Vagina (tissue), 2 donors: ENCODE measurements at regions of chr1 and their contacts with region 1.

Region 1: DNA sequence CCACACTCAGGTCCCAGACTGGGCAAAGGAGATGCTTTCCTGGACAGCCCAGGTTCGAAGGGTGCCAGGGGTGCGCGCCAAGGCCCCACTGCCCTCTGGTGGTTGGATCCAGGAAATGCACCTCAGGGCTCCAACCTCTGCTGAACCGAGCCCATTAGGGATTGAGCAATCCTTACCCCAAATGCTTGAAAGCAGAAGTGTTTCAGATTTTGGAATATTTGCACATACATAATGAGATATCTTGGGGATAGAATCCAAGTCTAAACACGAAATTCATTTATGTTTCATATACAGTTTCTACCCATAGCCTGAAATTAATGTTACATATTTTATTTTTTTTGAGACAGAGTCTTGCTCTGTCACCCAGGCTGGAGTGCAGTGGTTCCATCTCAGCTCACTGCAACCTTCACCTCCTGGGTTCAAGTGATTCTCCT is 57.4 kb downstream of the SLC9A1 start:
- DNase-seq: no peak
- H3K4me3 ChIP-seq: no peak overlapping the region
- H3K27ac ChIP-seq: peak overlapping the region; percentile 93
- H3K4me1 ChIP-seq: peaks cover 31% of the 10 kb centered on the region
- H3K27me3 ChIP-seq: no peaks in the 10 kb centered on the region
- CTCF ChIP-seq: peak; percentile 95 to 99 (median 98)
- POLR2A ChIP-seq: no peak

Region 2: DNA sequence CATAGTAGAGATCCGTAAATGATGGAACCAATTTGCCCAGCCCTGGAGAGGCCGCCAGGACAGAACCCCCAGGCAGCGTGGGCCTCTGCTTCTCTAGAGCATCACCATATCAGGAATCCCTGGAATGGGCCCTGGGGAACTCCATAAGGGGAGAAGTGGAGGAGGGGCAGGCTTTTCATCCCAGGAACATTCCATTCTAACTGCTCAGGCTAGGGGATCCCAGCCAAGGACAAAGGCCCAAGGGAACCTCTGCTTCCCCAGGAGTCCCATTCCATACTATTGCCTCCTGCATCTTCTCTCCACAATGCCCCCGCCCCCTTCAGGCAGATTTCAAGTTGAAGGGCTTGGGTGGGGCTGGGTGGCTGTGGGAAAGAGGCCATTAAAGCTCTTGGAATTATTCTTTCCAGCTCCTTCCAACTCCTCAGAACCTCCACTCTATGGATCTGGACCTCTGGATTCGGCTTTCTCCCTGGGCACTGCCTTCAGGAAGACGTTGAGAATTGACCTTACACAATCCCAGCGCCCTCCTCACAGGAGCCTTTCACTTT is 98.0 kb before region 1 on chr1:
- intact Hi-C with region 1: loop called (anchors 5 kb)
- DNase-seq: no peak
- H3K4me3 ChIP-seq: peak overlapping the region in 1 of 2 donors; percentile 9
- H3K27ac ChIP-seq: peak overlapping the region; percentile 91
- H3K4me1 ChIP-seq: peaks cover 89% of the 10 kb centered on the region
- H3K27me3 ChIP-seq: no peaks in the 10 kb centered on the region
- CTCF ChIP-seq: peak in 1 of 3 experiments; percentile 22
- POLR2A ChIP-seq: no peak

Region 3: DNA sequence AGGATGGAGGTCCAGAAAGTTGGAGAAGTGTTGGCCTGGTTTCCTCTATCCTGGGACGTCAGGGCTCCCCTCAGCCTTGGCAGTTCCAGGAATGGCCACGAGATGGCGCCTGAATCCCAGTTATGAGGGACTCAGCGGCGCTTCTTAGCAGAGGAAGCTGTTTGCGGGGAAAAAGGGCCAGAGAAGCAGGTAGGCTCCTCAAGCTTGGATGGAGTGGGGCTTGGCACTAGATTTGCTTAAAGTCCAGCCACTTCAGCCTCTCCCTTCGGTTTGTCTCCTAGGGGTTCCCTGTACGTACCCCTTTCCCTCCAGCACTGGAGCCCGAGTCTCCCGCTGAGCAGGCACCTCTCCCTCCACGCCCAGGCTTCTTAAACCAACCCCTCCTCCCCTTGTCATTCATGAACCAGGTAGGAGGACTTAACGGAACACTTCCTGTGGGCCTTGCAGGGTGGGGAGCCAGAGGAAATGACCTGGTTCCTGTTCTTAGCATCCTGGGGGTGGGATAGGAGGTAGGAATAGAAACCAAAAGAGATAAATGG is 52.8 kb before region 1 on chr1:
- intact Hi-C with region 1: loop called (anchors 5 kb)
- DNase-seq: no peak
- H3K4me3 ChIP-seq: peak overlapping the region in 1 of 2 donors; percentile 13
- H3K27ac ChIP-seq: no peak overlapping the region
- H3K4me1 ChIP-seq: peaks cover 17% of the 10 kb centered on the region
- H3K27me3 ChIP-seq: no peaks in the 10 kb centered on the region
- CTCF ChIP-seq: peak; percentile 91 to 96 (median 95)
- POLR2A ChIP-seq: no peak